ENCODE measurements at regions of chr9 and their contacts with region 1.

Region 1: DNA sequence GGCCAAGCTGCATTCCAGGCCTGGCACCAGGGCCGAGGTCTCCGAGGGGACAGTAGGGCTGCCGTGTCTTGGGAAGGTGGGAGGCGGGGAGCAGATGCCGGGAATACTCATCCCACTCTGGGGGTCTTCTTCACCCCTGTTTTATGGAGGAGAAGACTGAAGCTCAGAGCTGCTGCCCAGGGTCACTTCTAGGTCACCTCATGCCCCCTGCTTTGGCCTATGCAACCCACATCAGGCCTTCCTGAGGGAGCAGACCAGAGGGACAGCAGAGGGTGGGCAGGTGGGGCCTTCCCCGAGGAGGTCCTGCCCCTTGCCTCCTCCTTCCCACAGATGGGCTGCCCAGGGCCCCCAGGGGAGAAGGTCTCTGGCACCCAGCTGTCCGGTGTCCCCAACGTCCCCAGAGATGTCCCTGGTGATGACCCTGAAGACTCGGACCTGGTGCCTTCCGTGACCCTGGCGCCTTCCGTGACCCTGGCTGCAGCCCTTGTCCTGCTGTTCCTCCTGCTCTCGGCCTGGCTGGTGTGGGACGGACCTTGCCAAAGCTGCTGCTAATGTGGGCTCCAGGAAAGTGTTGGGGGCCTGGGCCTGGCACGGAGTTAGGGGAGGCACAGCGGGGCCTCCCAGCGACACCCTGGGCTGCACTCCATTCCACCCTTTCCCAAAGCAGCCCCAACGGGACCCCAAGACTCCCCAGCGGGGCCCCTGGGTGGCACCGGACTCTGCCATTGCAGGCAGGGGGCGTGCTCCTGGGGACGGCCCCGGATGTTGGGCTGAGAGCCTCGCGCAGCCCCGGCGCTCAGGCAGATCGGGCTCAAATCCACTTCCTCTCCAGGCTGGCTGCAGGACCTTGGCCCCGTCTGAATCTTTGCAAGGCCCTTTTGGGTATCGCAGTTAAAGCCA is 6.7 kb upstream of the SLC2A6 start:
- DNase-seq: peak in 2 of 3 donors; percentile 22 to 51
- ATAC-seq: peak in 3 of 4 donors; percentile 5 to 11 (median 9)
- H3K4me3 ChIP-seq: no peak overlapping the region
- H3K27ac ChIP-seq: no peak overlapping the region
- H3K4me1 ChIP-seq: no peaks in the 10 kb centered on the region
- H3K27me3 ChIP-seq: no peaks in the 10 kb centered on the region
- CTCF ChIP-seq: no peak
- POLR2A ChIP-seq: no peak

Region 2: DNA sequence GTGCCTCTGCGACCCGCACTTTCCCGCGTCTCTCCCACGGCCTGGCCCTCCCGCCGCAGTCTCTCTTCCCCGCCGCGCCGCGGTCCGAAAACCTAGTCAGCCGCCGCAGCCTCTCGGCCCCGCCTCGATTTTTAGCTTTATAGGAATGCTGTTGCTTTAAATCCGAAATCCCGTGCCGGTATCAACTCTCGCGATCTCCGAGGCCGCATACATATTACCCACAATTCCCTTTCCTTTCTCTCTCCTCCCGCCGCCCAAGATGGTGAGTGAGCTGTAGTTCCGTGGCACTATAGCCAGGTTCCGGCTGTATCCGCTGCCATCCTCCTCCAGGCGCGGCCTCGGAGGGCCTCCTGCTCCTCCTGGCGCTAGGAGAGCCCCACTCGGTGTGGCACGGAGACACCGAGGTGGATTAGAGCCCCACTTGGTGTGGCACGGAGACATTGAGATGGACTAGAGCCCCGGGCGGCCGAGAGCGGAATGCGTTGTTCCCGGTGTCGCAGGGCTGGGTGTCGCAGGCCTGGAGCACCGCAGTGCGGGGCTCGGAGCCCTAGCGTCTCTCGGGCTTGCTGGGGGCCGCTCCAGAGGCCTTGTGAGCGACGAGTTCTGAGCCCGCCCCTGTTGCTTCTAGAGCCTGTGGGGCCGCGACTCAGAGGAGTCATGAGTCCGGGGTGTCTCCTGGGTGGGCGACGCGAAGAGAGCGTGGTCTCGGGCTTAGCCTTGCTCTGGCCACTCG is 137.5 kb before region 1 on chr9 and contains the starts of genes MED22 and RPL7A:
- intact Hi-C with region 1: loop called in 1 of 2 experiments (anchors 10 kb)
- DNase-seq: peak; percentile 90 to 94 (median 92)
- ATAC-seq: peak; percentile 85 to 91 (median 88)
- H3K4me3 ChIP-seq: peak within 1 kb of the TSS; percentile 72 to 99 (median 98)
- H3K27ac ChIP-seq: peak within 1 kb of the TSS; percentile 67 to 90 (median 74)
- H3K4me1 ChIP-seq: peaks cover 0 to 17% (median 4%) of the 10 kb centered on the region in 4 donors
- H3K27me3 ChIP-seq: no peaks in the 10 kb centered on the region
- CTCF ChIP-seq: no peak
- POLR2A ChIP-seq: peak; percentile 77
- total RNA-seq, gene MED22: 5.9 to 14.5 (median 8.1) TPM
- total RNA-seq, gene RPL7A: 529 to 851 (median 616) TPM

Region 3: GRCh38 chr9:133406480-133407307 is 78.9 kb before region 1 on chr9:
- intact Hi-C with region 1: loop called (anchors 5 kb)
- DNase-seq: peak; percentile 74 to 82 (median 81)
- ATAC-seq: peak; percentile 84 to 91 (median 88)
- H3K4me3 ChIP-seq: no peak overlapping the region
- H3K27ac ChIP-seq: no peak overlapping the region
- H3K4me1 ChIP-seq: peaks cover 0 to 9% (median 2%) of the 10 kb centered on the region in 4 donors
- H3K27me3 ChIP-seq: no peaks in the 10 kb centered on the region
- CTCF ChIP-seq: peak; percentile 87 to 93 (median 92)
- POLR2A ChIP-seq: no peak

Region 4: GRCh38 chr9:134192951-134193731 is 707.5 kb after region 1 on chr9:
- intact Hi-C with region 1: no loop called
- DNase-seq: peak; percentile 19 to 53 (median 42)
- ATAC-seq: no peak
- H3K4me3 ChIP-seq: no peak overlapping the region
- H3K27ac ChIP-seq: no peak overlapping the region
- H3K4me1 ChIP-seq: peaks cover 0 to 34% (median 13%) of the 10 kb centered on the region in 4 donors
- H3K27me3 ChIP-seq: no peaks in the 10 kb centered on the region
- CTCF ChIP-seq: no peak
- POLR2A ChIP-seq: no peak